ENCODE measurements at regions of chr14 and their contacts with region 1.

Region 1: GRCh38 chr14:96741151-96741977 is 55.8 kb upstream of the VRK1 start:
- DNase-seq: peak; percentile 57
- ATAC-seq: peak; percentile 86

Region 2: DNA sequence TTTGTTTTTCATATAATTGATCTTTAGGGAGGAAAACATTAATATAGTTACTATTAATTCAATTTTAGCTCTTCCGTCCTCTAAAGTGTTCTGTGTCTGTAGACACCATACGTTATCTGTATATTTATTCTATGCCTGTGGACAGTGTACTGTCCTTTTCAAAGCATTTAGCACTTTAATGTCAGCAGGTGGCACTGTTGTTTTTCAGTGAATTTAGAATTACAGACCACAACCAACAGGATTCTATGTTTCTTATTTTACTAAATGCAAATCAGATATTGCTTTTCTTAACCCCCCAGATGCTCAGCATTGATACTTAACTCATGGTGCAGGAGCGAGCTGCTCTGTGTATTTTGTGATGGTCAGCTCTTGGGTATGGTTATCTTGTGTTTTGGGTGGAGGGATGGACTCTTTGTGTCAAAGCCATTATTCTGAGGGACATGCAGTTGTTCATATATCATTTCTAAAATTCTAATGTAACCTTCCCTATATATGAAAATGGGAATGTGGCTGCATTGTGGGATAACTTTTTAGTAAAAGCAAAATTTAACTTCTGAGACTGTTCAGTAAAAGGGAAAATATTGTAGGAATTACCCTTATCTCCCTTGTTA is 174.0 kb before region 1 on chr14:
- intact Hi-C with region 1: loop called (anchors 5 kb)
- DNase-seq: no peak
- ATAC-seq: peak in 1 of 2 donors; percentile 49

Region 3: DNA sequence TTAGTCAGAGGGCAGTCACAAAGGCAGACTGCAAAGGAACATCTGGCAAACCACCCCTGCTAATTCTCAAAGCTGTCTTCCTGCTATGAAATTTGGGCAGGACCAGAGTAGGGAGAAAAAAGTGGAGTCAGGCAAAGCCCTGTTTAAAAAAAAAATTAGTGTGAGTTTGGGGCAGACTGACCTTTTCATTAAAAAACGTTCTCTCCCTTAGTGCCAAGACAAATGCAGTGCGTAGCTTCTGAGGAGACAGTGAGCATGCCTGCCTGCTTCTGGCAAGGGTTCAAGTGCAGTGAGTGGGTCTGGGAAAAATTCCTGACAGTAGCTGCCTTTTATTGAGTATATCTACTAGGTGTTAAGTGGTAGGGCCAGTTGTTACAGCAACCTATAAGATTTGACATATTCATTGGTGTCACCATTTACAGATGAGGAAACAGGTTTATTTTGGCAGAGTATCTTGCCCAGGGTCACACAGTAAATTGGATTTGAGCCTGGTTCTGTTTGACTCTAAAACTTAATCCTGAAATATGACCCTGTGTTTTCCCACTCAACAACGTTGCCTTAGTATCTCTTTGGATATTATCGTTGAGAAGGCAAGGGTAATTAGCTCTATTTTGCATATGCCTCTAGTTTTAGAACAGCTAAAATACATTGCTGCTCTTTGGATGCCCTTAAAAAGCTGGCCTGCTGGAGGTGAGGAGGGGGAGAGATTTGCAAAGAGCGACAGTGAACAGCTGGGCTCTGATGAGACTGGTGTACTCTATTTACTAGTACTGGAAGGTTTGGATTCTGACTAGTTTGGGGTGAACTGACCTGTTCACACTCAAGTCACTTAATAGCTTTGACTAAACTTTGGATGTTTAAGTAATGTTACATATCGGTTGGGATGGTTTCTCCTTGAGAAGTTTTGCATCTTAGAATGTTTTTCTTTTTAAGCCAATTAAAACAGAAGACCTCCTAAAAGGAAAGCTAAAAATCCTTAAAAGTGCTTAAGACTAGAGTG is 166.4 kb before region 1 on chr14:
- intact Hi-C with region 1: loop called in 1 of 2 experiments (anchors 5 kb)
- DNase-seq: no peak
- ATAC-seq: peak; percentile 45 to 63

Region 4: DNA sequence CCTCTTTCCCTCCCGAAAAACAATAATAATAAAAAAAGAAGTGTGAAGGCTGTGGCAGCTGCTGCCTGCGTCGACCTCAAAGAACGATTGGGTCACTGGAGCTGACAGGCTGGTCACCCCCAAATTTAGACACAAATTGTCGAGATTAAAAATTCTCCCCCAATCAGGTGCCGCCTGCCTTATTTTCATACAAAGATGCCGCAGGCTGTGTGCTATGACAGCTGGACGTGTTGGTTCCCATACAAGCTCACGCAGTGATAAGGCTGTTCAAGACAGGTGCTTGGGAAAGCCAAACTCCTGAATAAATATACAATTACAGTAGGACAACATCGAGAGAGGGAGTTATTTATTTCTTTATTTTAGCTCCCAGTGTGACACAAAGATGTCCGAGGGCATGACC is 1097.6 kb after region 1 on chr14:
- intact Hi-C with region 1: no loop called
- DNase-seq: no peak
- ATAC-seq: no peak

Measured in left cardiac atrium (tissue), 4 donors.